ENCODE measurements at regions of chr10 and their contacts with region 1.

Region 1: GRCh38 chr10:50988792-50989191 is 85.5 kb upstream of the PRKG1 start:
- DNase-seq: peak; percentile 53
- ATAC-seq: no peak
- H3K4me3 ChIP-seq: peak overlapping the region; percentile 22; the same call in 1 of the 2 replicates
- H3K27ac ChIP-seq: peak overlapping the region; percentile 33; the same call in 1 of the 2 replicates
- H3K4me1 ChIP-seq: no peaks in the 10 kb centered on the region; the same call in 1 of the 2 replicates
- H3K27me3 ChIP-seq: no peaks in the 10 kb centered on the region
- CTCF ChIP-seq: peak; percentile 60
- POLR2A ChIP-seq: no peak
- RAD21 ChIP-seq: peak; percentile 53

Region 2: GRCh38 chr10:51052163-51052562 is 63.4 kb after region 1 on chr10:
- CTCF ChIA-PET with region 1: no interaction called
- POLR2A ChIA-PET with region 1: no interaction called
- dilution Hi-C with region 1: no loop called
- in situ Hi-C with region 1: no loop called
- intact Hi-C with region 1: loop called (anchors 5 kb)
- DNase-seq: no peak
- ATAC-seq: no peak
- H3K4me3 ChIP-seq: no peak overlapping the region
- H3K27ac ChIP-seq: no peak overlapping the region
- H3K4me1 ChIP-seq: no peaks in the 10 kb centered on the region
- H3K27me3 ChIP-seq: no peaks in the 10 kb centered on the region
- CTCF ChIP-seq: no peak
- POLR2A ChIP-seq: no peak
- RAD21 ChIP-seq: no peak

Region 3: GRCh38 chr10:51224671-51225161 is 235.9 kb after region 1 on chr10:
- CTCF ChIA-PET with region 1: no interaction called
- POLR2A ChIA-PET with region 1: no interaction called
- dilution Hi-C with region 1: no loop called
- in situ Hi-C with region 1: no loop called
- intact Hi-C with region 1: loop called (anchors 5 kb)
- DNase-seq: peak; percentile 88
- ATAC-seq: peak; percentile 88
- H3K4me3 ChIP-seq: no peak overlapping the region
- H3K27ac ChIP-seq: peak overlapping the region; percentile 99; the same call in 1 of the 2 replicates
- H3K4me1 ChIP-seq: peaks cover 9% of the 10 kb centered on the region
- H3K27me3 ChIP-seq: no peaks in the 10 kb centered on the region
- CTCF ChIP-seq: no peak
- POLR2A ChIP-seq: no peak
- RAD21 ChIP-seq: no peak